H1 (cell line): ENCODE measurements at regions of chr10 and their contacts with region 1.

Region 1: DNA sequence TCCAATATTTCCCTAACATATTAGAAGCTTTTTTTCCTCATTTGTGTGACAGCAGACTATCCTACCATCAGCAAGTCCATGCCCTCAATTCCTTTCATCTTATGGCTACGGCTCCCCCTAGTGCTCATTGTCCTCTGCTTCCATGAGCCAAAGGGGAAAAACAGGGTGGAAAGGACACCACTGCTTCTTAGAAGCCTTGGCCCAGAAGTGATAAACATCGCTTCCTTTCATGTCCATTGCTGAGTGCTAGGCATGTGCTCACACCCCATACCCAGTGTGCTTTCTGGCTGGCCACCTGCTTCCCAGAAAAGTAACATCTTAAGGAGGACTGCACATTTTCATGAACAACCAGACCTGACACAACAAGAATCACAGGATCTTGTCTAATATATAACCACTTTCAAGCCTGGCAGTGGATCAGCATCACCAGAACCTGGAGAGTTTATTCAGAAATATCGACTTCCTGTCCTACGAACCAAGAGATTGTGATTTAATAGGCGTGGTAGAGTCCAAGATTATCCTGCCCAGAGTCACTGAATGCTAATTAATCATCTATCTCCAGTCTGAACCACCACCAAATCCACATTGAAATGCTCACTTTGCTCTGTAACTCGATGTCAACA is 650.5 kb upstream of the SORCS1 start:
- DNase-seq: peak; percentile 36 to 69
- H3K4me3 ChIP-seq: no peak overlapping the region
- H3K27ac ChIP-seq: no peak overlapping the region
- H3K4me1 ChIP-seq: no peaks in the 10 kb centered on the region; a peak in 1 of 7 replicates
- H3K27me3 ChIP-seq: no peaks in the 10 kb centered on the region; a peak in 1 of 7 replicates
- CTCF ChIP-seq: peak; percentile 48 to 90 (median 71)
- EP300 ChIP-seq: no peak
- POLR2A ChIP-seq: no peak
- RAD21 ChIP-seq: peak; percentile 90

Region 2: GRCh38 chr10:107409522-107409921 is 405.5 kb before region 1 on chr10:
- CTCF ChIA-PET with region 1: interaction called, 15 read pairs
- POLR2A ChIA-PET with region 1: no interaction called
- DNase-seq: no peak
- H3K4me3 ChIP-seq: no peak overlapping the region
- H3K27ac ChIP-seq: no peak overlapping the region
- H3K4me1 ChIP-seq: no peaks in the 10 kb centered on the region
- H3K27me3 ChIP-seq: no peaks in the 10 kb centered on the region; a peak in 1 of 7 replicates
- CTCF ChIP-seq: peak in 2 of 3 experiments; percentile 39 to 48; a peak in 2 of 4 replicates
- EP300 ChIP-seq: no peak
- POLR2A ChIP-seq: no peak
- RAD21 ChIP-seq: peak; percentile 70 to 72